ENCODE measurements at regions of chr11 and their contacts with region 1.

Region 1: GRCh38 chr11:6377902-6378639 is 12.2 kb upstream of the SMPD1 start:
- DNase-seq: no peak
- H3K4me3 ChIP-seq: no peak overlapping the region
- H3K27ac ChIP-seq: peak overlapping the region; percentile 51
- H3K4me1 ChIP-seq: peaks cover 12% of the 10 kb centered on the region
- H3K27me3 ChIP-seq: no peaks in the 10 kb centered on the region
- CTCF ChIP-seq: no peak

Region 2: DNA sequence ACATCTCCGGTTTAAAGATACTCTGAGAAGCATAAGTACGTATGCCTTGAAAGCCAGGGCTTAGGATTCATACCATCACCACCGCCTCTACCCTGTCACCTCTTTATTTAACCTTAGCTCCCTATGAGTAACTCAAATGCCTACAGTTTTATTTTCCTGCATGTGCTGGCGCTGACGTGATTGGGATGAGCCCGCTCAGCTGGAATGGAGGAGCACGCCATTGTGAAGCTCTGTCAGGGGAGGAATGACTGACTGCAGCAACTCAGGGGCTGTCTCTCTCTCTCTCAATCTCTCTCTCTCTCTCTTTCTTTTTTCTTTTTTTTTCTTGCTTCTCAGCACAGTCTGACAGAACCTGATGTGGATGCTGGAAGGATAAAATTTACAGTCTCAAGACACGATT is 70.2 kb before region 1 on chr11:
- intact Hi-C with region 1: no loop called
- DNase-seq: no peak
- H3K4me3 ChIP-seq: no peak overlapping the region
- H3K27ac ChIP-seq: no peak overlapping the region
- H3K4me1 ChIP-seq: no peaks in the 10 kb centered on the region
- H3K27me3 ChIP-seq: peaks cover 3% of the 10 kb centered on the region
- CTCF ChIP-seq: no peak

Region 3: DNA sequence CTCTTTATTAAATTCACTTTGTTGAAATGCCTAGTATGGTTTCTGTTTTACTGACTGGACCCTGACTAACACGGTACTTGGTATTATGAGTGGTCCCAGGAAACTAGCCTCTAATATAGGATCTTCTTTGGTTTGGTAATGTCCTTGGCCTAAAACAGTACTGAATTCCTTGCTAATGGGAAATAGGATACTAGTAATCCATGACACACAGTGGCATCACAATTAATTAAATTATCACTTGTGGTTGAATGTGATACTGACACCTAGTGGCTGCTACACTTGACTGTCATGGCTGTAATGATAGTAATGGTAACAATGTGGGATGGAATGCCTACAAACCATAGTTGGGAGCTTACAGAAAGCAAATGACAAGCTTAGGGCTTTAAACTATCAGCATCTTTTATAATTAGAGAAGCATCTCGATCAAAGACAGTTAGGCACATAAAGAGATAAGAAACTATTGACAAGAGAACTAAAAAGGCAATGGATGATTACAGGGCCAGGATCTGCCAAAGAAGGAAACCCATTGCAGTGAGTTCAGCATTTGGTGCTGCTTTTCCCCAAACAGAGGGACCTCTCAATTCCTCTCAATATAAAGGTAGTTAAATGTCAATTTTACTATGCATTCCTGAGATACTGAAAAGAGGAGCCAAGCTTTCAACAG is 127.6 kb after region 1 on chr11:
- intact Hi-C with region 1: loop called (anchors 5 kb)
- DNase-seq: no peak
- H3K4me3 ChIP-seq: no peak overlapping the region
- H3K27ac ChIP-seq: no peak overlapping the region
- H3K4me1 ChIP-seq: no peaks in the 10 kb centered on the region
- H3K27me3 ChIP-seq: no peaks in the 10 kb centered on the region
- CTCF ChIP-seq: peak; percentile 80